ENCODE measurements at regions of chr13 and their contacts with region 1.

Region 1: DNA sequence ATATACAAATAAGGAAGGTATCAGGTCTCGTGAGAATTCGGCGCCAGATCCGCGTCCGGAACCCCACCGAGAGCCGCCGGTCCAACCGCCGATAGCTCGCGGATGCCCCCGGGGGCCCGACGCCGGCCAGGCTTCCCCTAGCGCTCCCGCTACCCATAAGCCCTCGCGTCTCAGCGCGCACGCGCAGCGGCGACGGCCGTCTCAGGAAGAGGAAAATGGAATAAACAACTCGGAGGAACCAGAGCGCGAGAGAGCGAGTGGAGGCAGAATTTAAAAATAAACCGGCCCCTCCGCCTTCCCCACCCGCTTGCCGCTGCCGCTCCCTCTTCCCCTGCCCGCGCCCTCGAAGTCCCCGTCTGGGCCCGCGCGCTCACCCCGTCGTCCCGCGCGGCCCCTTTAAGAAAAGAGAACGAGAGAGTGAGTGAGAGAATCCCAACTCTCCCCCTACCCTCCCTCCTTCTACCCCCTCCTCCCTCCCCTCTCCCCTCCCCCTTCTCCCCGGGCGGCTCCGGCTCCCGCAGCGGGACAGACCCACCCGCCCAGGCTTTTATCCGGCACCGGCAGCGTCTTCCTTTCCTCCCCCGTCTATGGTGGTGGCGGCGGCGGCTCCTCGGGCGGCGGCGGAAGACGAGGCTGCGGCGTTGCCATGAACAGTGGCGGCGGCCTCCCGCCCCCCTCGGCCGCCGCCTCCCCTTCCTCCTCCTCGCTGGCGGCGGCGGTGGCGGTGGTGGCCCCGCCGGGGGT is at the start of gene PAN3:
- DNase-seq: peak; percentile 89
- H3K4me3 Mint-ChIP-seq: peak within 1 kb of the TSS; percentile 96
- H3K27ac Mint-ChIP-seq: peak within 1 kb of the TSS; percentile 97
- H3K4me1 Mint-ChIP-seq: peaks cover 50% of the 10 kb centered on the region
- H3K27me3 Mint-ChIP-seq: no peaks in the 10 kb centered on the region
- total RNA-seq, gene PAN3: 36.1 and 37.0 TPM in 2 replicates

Region 2: DNA sequence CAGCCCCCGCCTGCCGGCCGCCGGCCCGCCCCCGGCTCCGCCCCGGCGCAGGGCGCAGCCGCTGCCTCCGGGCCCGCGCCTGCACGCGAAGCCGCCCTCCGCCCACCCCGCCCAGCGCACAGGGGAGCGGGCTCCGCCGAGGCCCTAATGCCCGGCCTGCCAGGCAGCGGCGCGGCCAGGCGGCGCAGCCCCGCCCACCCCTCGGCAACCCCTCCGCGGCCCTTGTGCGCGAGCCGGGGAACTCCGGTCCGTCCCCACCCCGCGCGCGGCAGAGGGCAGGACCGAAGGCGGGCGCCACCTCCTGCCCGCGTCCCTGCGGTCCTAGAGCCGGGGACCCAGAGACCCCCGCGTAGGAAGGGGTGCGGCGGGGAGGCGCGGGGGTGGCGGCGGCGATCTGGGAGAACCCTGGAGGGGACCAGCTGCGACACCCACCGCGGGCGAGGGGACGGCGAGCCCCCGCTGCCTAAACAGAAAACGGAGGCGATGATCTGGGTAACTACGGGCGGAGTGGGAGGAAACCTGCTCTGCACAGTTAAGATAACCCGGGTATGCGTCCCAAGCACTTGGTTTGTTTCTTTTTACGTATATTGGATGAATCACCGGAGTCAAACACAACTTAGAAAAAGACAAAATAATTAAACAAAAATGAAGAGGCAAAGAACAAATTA is 966.2 kb before region 1 on chr13:
- intact Hi-C with region 1: loop called (anchors 1 kb)
- DNase-seq: peak; percentile 92
- H3K4me3 Mint-ChIP-seq: peak overlapping the region; percentile 81
- H3K27ac Mint-ChIP-seq: peak overlapping the region; percentile 87
- H3K4me1 Mint-ChIP-seq: peaks cover 53% of the 10 kb centered on the region
- H3K27me3 Mint-ChIP-seq: no peaks in the 10 kb centered on the region

Region 3: GRCh38 chr13:27620377-27621115 is 517.6 kb before region 1 on chr13 and contains the start of gene LNX2:
- intact Hi-C with region 1: loop called (anchors 2 kb)
- DNase-seq: peak; percentile 97
- H3K4me3 Mint-ChIP-seq: peak within 1 kb of the TSS; percentile 88
- H3K27ac Mint-ChIP-seq: peak within 1 kb of the TSS; percentile 88
- H3K4me1 Mint-ChIP-seq: peaks cover 57% of the 10 kb centered on the region
- H3K27me3 Mint-ChIP-seq: no peaks in the 10 kb centered on the region
- total RNA-seq, gene LNX2: 4.1 and 4.5 TPM in 2 replicates

Region 4: DNA sequence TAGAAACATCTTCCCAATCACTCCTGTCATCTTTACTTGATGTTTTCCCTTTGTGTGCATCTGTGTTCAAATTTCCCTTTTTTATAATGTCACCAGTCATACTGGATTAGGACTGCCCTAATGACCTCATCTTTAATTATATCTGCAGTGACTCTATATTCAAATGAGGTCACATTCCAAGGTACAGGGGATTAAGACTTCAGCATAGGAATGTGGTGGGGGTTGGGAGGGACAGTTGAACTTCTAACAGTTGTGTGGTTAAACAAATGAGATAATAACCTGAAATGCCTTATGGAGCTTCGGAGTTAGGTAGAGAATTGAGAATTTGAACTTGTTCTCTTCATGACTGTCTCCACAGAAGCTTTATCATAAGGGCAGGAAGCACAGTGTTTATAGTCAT is 23.2 kb after region 1 on chr13:
- intact Hi-C with region 1: no loop called
- DNase-seq: no peak
- H3K4me3 Mint-ChIP-seq: no peak overlapping the region
- H3K27ac Mint-ChIP-seq: no peak overlapping the region
- H3K4me1 Mint-ChIP-seq: peaks cover 4% of the 10 kb centered on the region
- H3K27me3 Mint-ChIP-seq: no peaks in the 10 kb centered on the region

Region 5: GRCh38 chr13:28204690-28205443 is 66.7 kb after region 1 on chr13:
- intact Hi-C with region 1: loop called (anchors 1 kb)
- DNase-seq: no peak
- H3K4me3 Mint-ChIP-seq: peak overlapping the region; percentile 43
- H3K27ac Mint-ChIP-seq: peak overlapping the region; percentile 54
- H3K4me1 Mint-ChIP-seq: peaks cover 26% of the 10 kb centered on the region
- H3K27me3 Mint-ChIP-seq: no peaks in the 10 kb centered on the region

Region 6: DNA sequence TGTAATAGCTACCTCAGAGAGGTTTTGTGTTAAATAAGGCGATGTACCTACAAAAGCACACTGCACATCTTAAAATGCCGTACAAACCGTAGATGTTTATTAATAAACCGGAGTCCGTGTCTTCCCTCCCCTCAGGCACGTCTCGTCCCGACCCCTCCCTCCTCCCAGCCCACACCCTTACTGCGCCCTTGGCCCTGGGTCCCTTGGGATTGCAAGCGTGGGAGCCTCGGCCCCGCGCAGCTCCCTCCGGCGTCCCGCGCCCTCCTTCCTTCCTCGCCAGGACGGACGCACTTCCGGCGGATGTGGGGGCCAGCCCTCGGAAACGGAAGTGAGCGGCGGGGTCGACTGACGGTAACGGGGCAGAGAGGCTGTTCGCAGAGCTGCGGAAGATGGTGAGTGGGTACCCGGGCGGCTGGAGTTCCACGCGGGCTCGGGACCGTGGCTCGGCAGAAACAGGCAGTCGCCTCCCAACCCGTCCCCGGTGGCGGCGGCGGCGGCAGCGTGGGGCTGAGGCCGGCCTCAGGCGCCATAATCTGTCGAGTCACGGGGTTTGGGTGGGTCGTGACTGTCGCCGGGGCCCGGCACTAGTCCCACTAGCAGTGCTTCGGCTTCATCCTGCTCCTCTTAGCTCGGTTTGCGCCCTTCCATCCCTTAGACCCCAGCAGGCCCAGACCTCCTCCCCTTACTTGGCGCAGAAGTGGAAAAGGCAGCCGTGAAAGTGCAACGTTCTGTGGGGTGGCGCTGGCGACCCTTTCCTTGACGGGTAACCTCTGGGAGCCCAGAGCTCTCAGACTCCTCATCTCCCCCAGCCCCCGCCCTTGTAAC is 520.8 kb after region 1 on chr13 and contains the start of gene POMP:
- intact Hi-C with region 1: loop called (anchors 1 kb)
- DNase-seq: peak; percentile 90
- H3K4me3 Mint-ChIP-seq: peak within 1 kb of the TSS; percentile 97
- H3K27ac Mint-ChIP-seq: peak within 1 kb of the TSS; percentile 97
- H3K4me1 Mint-ChIP-seq: peaks cover 59% of the 10 kb centered on the region
- H3K27me3 Mint-ChIP-seq: no peaks in the 10 kb centered on the region
- total RNA-seq, gene POMP: 147 TPM in 2 replicates

Measured in activated T-helper 1 cell treated with anti-CD3 and anti-CD28 coated beads, Interleukin-12 subunit alpha, Interleukin-12 subunit beta, Interleukin-2, Interleukin-4 antibody, amounts not matched to agents 30 ng/mL and 10 ng/mL and 1 ng/mL, durations not matched to agents 14 hours and 24 hours and 36 hours (primary cell).